ENCODE measurements at regions of chr2 and their contacts with region 1.

Region 1: DNA sequence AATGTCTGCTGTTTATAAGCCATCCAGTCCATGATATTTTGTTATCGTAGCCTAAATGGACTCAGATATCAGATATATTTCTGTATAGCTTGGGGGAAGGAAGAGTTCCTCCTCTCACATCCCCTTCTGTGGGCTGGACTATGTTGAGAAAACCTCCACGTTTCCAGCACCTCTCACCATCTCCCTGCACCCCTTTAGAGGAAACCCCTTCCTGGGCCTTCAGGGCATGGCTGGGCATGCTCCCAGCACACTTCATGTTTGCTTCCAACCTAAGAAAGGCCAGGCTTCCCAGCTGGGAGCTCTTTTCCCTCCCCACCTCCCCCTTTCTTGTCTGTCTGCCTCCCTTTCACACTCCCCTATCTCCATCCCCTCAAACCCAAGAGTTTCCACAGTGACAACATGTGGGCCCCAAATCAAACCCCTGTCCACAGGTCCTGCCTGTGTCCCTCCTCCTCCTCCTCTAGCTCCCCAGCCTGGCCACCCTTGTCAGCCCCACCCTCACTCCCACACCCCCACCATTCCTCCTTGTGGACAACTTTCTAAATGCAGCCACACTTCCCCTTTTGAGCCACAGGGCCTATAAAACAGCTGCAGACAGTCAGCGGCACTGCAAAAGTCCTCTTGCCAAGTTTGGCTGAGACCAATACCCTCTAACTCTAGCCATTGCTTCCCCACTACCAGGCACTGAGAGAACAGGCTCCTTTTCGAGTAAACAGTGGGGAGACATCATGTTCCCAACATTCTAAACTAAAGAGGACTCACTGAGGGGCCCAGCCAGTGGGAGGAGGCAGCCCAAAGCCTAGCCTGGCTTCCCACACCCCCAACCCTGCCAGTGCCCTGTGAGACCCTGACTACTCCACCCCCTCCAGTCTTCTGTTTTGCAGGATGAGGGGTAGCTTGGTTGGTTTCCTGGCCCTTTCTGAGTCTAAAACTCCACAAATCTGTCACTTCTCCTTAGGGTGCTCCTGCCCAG is 120.5 kb downstream of the ZFP36L2 start:
- DNase-seq: peak; percentile 73
- ATAC-seq: peak; percentile 59
- H3K4me3 ChIP-seq: no peak overlapping the region
- H3K27ac ChIP-seq: peak overlapping the region; percentile 94
- H3K4me1 ChIP-seq: peaks cover 63% of the 10 kb centered on the region
- H3K27me3 ChIP-seq: no peaks in the 10 kb centered on the region
- CTCF ChIP-seq: peak; percentile 42
- POLR2A ChIP-seq: no peak
- RAD21 ChIP-seq: peak; percentile 38

Region 2: GRCh38 chr2:42964439-42965083 is 141.3 kb before region 1 on chr2:
- CTCF ChIA-PET with region 1: no interaction called
- POLR2A ChIA-PET with region 1: no interaction called
- dilution Hi-C with region 1: no loop called
- in situ Hi-C with region 1: no loop called
- intact Hi-C with region 1: loop called (anchors 10 kb)
- DNase-seq: peak; percentile 98
- ATAC-seq: peak; percentile 83
- H3K4me3 ChIP-seq: no peak overlapping the region
- H3K27ac ChIP-seq: peak overlapping the region; percentile 69
- H3K4me1 ChIP-seq: peaks cover 44% of the 10 kb centered on the region
- H3K27me3 ChIP-seq: no peaks in the 10 kb centered on the region
- CTCF ChIP-seq: no peak
- POLR2A ChIP-seq: no peak
- RAD21 ChIP-seq: no peak

Region 3: DNA sequence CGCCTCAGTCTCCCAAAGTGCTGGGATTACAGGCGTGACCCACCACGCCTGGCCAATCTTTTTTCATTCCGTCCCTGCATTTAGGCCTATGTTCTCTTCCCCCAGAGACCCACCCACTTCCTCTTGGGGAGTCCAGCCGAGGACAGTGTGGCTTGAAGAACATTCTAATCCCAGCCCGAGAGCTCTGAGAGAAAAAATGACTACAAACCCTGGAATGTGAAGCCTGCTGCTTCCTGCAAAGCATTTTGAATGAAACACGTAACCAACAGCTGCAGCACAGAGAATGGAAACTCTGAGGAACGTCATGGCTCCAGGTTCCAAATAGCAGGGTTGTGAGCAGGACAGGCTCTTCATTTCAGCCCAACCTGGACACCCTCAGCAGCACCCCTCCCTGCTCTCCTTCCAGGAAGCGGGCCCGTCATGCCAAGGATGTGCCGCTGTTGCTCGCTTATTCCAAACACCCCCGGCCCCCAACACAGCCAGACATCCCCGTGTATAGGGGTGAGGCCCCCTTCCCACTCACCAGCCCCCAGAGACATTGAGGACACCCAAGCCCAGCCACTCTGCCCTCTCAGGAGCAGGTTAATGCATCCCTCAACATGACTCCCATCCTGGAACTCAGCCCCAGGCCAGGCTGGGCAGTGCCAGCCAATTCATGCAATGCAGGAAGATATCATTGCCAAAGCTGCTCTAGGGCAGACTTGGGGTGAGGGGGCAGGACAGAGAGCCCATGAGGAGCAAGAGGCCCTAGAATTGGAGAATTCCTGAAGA is 19.2 kb before region 1 on chr2:
- CTCF ChIA-PET with region 1: interaction called, 3 read pairs
- POLR2A ChIA-PET with region 1: interaction called, 3 read pairs
- dilution Hi-C with region 1: no loop called
- in situ Hi-C with region 1: no loop called
- intact Hi-C with region 1: loop called (anchors 2 kb)
- DNase-seq: peak; percentile 100
- ATAC-seq: peak; percentile 87
- H3K4me3 ChIP-seq: no peak overlapping the region
- H3K27ac ChIP-seq: peak overlapping the region; percentile 99
- H3K4me1 ChIP-seq: peaks cover 61% of the 10 kb centered on the region
- H3K27me3 ChIP-seq: no peaks in the 10 kb centered on the region
- CTCF ChIP-seq: no peak
- POLR2A ChIP-seq: peak; percentile 64; the same call in 1 of the 2 replicates
- RAD21 ChIP-seq: peak; percentile 29

Measured in IMR-90 (cell line).